Dendritic cell treated with granulocyte-macrophage colony-stimulating factor and Interleukin-4, amounts not matched to agents 40 ng/mL and 50 ng/mL, for 4 days (primary cell): ENCODE measurements at regions of chr2 and their contacts with region 1.

Region 1: GRCh38 chr2:118088051-118089024 is at the start of gene INSIG2:
- H3K4me3 Mint-ChIP-seq: peak within 1 kb of the TSS; percentile 96
- H3K27ac Mint-ChIP-seq: peak within 1 kb of the TSS; percentile 93
- H3K4me1 Mint-ChIP-seq: peaks cover 6% of the 10 kb centered on the region
- H3K27me3 Mint-ChIP-seq: peaks cover 10% of the 10 kb centered on the region

Region 2: GRCh38 chr2:118061135-118061955 is 27.0 kb before region 1 on chr2:
- intact Hi-C with region 1: loop called (anchors 2 kb)
- H3K4me3 Mint-ChIP-seq: no peak overlapping the region
- H3K27ac Mint-ChIP-seq: peak overlapping the region; percentile 25
- H3K4me1 Mint-ChIP-seq: peaks cover 42% of the 10 kb centered on the region
- H3K27me3 Mint-ChIP-seq: no peaks in the 10 kb centered on the region

Region 3: GRCh38 chr2:118103951-118104940 is 15.9 kb after region 1 on chr2:
- intact Hi-C with region 1: loop called (anchors 2 kb)
- H3K4me3 Mint-ChIP-seq: peak overlapping the region; percentile 0
- H3K27ac Mint-ChIP-seq: peak overlapping the region; percentile 83
- H3K4me1 Mint-ChIP-seq: peaks cover 47% of the 10 kb centered on the region
- H3K27me3 Mint-ChIP-seq: no peaks in the 10 kb centered on the region

Region 4: DNA sequence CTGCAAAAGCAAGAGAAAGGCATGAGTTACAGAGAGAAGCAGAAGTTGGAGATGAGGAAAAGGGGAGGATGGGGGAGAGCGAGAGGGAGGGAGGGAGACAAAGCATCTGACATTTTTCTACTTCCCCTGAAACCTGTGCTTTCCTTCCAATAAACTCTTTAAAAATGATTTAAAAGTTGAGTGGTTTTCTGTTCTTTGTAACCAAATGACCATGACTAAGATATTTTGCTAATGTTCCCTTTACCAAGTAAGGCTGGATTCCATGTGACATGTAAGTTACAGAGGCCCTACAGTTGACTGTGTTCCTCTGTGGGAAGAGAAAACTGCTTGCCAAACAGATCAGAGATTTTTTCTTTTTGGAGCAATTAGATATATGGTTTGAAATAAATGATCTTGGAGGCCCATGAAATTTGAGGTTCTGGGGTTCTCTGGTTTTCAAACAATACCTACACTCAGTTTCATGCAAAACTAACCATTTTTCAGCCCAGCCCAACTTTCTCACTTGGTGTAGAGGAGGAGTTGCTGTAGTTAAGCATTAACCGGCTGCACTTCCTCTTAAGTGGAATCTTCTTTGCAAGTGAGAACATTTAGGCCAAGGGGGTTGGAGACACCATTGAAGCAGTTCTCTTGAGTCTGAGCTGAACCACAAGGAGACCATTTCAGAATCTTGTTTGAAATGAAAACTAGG is 34.4 kb after region 1 on chr2:
- intact Hi-C with region 1: loop called (anchors 5 kb)
- H3K4me3 Mint-ChIP-seq: no peak overlapping the region
- H3K27ac Mint-ChIP-seq: peak overlapping the region; percentile 93
- H3K4me1 Mint-ChIP-seq: peaks cover 93% of the 10 kb centered on the region
- H3K27me3 Mint-ChIP-seq: no peaks in the 10 kb centered on the region

Region 5: DNA sequence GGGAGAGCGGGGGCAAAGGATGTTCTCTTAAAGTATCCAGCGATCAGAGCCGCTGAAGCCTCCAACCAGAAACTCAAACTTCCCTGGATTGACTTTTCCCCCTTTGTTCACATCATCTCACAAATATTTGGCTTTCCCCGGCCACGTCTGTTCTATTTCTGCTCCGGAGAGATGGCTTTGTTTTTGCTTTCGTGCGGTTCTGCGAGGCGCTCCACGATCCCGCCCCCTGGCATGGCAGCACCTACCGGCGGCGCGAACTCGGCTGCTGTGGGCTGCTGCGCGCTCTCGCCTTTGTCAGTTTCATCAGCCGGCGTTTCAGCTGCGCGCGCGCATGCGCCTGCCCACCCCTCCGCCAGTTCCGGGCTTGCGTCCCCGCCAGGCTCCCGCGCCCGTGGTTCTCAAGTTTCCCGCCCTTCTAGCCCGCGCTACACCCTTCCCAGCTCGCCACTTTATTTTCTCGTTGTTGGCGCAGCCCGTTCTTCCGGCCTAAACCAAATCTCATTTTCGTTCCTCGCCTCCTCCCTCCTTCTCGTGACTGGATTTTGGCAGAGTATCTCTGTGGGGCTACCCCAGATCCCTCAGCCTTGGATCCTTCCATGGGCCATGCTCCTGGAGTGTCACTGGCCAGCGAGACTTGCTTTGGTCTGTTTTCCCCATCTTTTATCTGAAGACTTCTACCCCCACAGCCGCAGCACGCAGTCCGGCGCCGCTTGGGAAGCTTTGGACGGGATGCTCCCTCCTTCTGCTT is 97.9 kb after region 1 on chr2:
- intact Hi-C with region 1: loop called (anchors 5 kb)
- H3K4me3 Mint-ChIP-seq: peak overlapping the region; percentile 81
- H3K27ac Mint-ChIP-seq: peak overlapping the region; percentile 91
- H3K4me1 Mint-ChIP-seq: peaks cover 22% of the 10 kb centered on the region
- H3K27me3 Mint-ChIP-seq: peaks cover 7% of the 10 kb centered on the region